ENCODE measurements at regions of chr1 and their contacts with region 1.

Region 1: DNA sequence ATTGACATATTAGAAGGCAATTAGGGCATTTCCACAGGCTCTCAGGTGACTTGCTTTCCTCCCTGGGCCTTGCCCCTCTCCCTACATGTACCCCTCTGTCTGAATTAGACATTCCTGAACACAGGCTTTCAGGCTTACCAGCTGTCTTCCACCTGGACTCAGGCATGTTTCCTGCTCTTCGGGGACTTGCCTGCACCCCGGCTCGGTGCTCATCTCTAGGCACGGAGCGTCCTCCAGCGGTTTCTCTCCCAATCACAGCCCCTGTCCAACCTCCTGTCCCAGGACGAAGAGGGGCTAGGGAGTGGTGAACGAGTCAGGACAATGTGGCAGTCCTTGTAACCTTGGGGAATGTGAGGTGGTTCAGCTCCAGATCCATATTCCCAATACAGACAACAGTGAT is 4.2 kb downstream of the PROK1 start:
- ATAC-seq: peak in 3 of 8 experiments; percentile 14 to 62 (median 62)
- H3K4me3 ChIP-seq: no peak overlapping the region
- H3K27ac ChIP-seq: no peak overlapping the region
- H3K4me1 ChIP-seq: no peaks in the 10 kb centered on the region

Region 2: DNA sequence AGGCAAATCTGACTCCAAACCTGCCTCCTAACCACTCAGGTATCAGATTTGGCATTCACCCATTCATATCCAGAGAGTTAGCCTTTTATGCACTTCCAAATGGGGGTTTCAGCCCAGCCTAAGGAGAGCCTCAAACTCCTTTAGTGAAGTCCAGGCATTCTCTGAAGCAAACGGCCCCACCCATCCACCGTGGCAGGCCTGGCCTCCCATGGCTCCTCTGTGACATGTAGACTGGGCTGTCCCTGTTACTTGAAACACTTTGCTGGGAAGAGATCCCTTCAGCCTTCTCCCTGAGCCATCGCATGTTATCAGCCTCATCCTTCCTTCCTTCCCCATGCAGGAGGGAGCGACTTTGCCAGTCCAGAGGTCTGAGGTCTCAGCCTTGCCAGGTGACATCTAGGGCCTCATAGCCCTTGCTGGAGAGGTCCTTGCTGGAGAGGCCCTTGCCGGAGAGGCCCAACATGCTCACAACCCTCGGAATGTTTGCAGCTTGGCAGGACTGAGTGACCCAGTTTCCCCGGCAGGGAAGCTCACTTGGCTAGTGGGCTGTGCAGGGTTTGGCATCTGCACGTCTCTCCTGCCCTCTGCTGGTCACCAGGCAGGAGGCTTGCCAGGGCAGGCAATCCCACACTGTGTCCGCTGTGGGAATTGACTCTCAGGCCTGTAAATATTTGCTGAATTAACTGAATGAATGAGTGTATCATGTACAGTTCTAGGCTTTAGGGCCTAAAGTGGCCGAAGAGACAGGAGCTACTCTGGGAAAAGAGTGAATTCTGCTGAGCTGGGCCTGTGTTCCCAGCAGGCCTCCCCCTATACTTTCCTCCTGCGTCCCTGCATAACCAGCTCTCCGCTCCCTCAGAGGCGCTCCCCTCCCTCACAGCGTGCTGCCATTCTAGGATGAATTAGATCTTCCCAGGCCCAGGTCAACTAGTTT is 142.7 kb before region 1 on chr1:
- in situ Hi-C with region 1: loop called in 1 of 9 experiments (anchors 10 kb)
- ATAC-seq: peak; percentile 88 to 100 (median 100)
- H3K4me3 ChIP-seq: no peak overlapping the region
- H3K27ac ChIP-seq: no peak overlapping the region
- H3K4me1 ChIP-seq: peaks cover 0 to 2% of the 10 kb centered on the region in 2 donors

Region 3: DNA sequence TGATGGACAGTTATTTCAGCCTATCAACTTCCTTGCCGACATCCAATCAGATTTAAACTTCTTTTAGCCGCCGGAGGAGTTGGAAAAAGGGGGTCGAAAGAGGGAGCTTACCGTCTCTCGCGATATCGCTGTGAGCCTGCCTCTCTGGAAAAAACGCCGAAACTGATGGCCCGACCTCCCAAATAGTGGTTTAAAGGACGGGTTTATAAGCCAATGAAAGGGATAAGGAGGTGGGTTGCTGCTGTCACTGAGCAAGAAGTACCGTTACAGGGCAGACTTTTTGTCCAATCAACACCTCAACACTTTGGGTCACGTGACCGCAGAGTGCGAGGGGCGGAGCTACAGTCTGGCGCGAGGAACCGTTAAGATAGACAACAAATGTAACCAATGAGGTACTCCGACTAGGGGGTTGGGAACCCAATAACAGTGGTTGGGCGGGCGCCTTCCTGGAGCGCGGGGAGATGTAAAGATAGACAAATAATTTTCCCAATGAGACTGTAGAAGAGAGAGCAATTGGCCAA is 116.2 kb before region 1 on chr1 and contains the start of gene RBM15:
- in situ Hi-C with region 1: no loop called
- ATAC-seq: peak; percentile 71 to 85 (median 83)
- H3K4me3 ChIP-seq: peak within 1 kb of the TSS; percentile 59 to 85 (median 73)
- H3K27ac ChIP-seq: peak within 1 kb of the TSS; percentile 91 to 97
- H3K4me1 ChIP-seq: peaks cover 26 to 42% of the 10 kb centered on the region in 2 donors
- total RNA-seq, gene RBM15: 17.9 to 49.7 (median 36.7) TPM

Region 4: GRCh38 chr1:110360431-110360830 is 94.7 kb before region 1 on chr1:
- in situ Hi-C with region 1: no loop called
- ATAC-seq: no peak
- H3K4me3 ChIP-seq: no peak overlapping the region
- H3K27ac ChIP-seq: no peak overlapping the region
- H3K4me1 ChIP-seq: peaks cover 0 to 3% of the 10 kb centered on the region in 2 donors

Measured in motor neuron (in vitro differentiated cells).